Activated CD4-positive, alpha-beta T cell treated with anti-CD3 and anti-CD28 coated beads for 36 hours (primary cell): ENCODE measurements at regions of chrX and their contacts with region 1.

Region 1: GRCh38 chrX:11137543-11138139 is 26.5 kb downstream of the HCCS start:
- DNase-seq: no peak
- ATAC-seq: no peak
- H3K4me3 Mint-ChIP-seq: no peak overlapping the region
- H3K27ac Mint-ChIP-seq: no peak overlapping the region
- H3K4me1 Mint-ChIP-seq: no peaks in the 10 kb centered on the region
- H3K27me3 Mint-ChIP-seq: no peaks in the 10 kb centered on the region

Region 2: GRCh38 chrX:10722851-10723250 is 414.8 kb before region 1 on chrX:
- CTCF ChIA-PET with region 1: no interaction called
- POLR2A ChIA-PET with region 1: no interaction called
- intact Hi-C with region 1: loop called in 1 of 2 experiments (anchors 5 kb)
- DNase-seq: peak; percentile 47
- ATAC-seq: no peak
- H3K4me3 Mint-ChIP-seq: no peak overlapping the region
- H3K27ac Mint-ChIP-seq: no peak overlapping the region
- H3K4me1 Mint-ChIP-seq: no peaks in the 10 kb centered on the region
- H3K27me3 Mint-ChIP-seq: no peaks in the 10 kb centered on the region

Region 3: DNA sequence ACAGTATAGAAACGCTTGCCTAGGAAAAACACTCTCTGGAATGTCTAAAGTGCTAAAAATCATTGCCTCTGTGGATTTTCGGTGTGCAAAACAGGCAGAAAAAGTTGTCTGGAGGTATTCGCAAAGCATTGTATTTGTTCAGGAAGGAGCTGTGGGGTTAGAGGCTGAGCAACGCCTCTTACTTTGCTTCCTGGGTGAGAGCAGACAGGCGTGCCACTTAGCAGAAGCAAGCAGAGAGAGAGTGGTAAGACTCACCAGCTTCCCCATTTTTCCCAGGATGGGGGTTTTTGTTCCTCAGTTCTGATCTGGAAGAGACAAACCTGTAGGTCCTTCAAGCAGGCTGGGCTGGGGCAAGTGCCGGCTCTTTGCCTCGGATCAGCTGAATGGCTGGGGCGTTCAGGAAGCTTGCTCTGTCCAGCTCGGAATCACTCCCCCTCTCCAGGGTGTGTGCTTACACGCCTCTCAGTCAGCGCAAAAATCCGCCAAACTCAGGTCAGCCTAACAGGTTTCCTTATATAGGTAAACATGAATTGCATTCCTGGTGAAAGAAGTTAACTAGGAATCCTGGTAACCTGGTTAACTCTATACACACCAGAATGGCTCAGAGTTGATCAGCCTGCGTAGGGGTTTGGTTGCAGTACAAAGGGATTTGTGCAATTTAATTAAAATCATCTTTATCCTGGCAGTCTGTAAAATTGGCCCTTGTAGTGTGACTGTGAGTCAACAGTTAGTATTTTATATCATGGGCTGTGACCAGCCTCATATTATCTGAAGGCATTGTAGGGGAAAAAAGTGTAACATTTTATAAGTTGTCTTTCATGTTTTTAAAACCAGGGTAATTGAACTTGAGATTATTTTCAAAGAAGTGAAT is 304.1 kb before region 1 on chrX:
- CTCF ChIA-PET with region 1: no interaction called
- POLR2A ChIA-PET with region 1: no interaction called
- intact Hi-C with region 1: loop called in 1 of 2 experiments (anchors 5 kb)
- DNase-seq: no peak
- ATAC-seq: no peak
- H3K4me3 Mint-ChIP-seq: no peak overlapping the region
- H3K27ac Mint-ChIP-seq: no peak overlapping the region
- H3K4me1 Mint-ChIP-seq: no peaks in the 10 kb centered on the region
- H3K27me3 Mint-ChIP-seq: no peaks in the 10 kb centered on the region